ENCODE measurements at regions of chr3 and their contacts with region 1.

Region 1: GRCh38 chr3:69542221-69543079 is 156.6 kb upstream of the FRMD4B start:
- DNase-seq: peak in 4 of 5 donors; percentile 20 to 70 (median 46)
- ATAC-seq: peak; percentile 12 to 77 (median 70)
- H3K4me3 ChIP-seq: peak overlapping the region; percentile 55 to 77 (median 62)
- H3K27ac ChIP-seq: peak overlapping the region in 9 of 12 donors; percentile 3 to 70 (median 47)
- H3K4me1 ChIP-seq: peaks cover 0 to 24% (median 5%) of the 10 kb centered on the region in 12 donors
- H3K27me3 ChIP-seq: peaks cover 0 to 13% (median 0%) of the 10 kb centered on the region in 9 donors
- CTCF ChIP-seq: no peak
- POLR2A ChIP-seq: no peak

Region 2: DNA sequence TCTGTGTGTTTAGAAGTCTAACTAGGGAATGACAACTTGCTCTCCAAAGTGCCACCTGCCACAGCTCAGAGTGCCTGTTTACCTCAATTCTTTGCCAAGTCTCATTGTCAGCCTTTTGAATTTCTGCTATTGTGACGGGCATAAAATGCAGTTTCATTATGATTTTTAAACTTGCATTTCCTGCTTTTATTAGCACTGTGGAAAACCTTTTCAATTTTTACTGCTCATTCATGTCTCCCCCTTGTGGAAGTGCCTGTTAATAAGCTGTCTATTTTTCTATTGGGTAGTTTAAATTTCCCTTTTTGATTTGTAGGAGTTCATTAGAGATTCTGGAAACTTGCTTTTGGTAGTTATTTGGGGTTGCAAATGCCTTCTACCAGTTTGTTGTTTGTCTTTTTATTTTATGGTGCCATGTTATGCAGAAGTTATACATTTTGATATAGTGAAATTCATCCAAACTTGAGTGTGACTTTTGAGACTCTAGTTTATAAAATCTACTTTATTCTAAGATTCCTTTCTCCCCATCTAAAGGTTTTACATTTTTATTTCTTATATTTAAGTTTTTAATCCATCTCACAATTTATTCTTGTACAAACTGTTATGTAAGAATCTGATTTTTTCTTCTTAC is 102.7 kb before region 1 on chr3:
- intact Hi-C with region 1: loop called in 2 of 10 experiments (anchors 5 to 10 kb)
- DNase-seq: no peak
- ATAC-seq: peak in 2 of 4 donors; percentile 42 to 59
- H3K4me3 ChIP-seq: peak overlapping the region in 6 of 12 donors; percentile 8 to 39 (median 23)
- H3K27ac ChIP-seq: peak overlapping the region in 1 of 12 donors; percentile 16
- H3K4me1 ChIP-seq: peaks cover 0 to 20% (median 0%) of the 10 kb centered on the region in 12 donors
- H3K27me3 ChIP-seq: no peaks in the 10 kb centered on the region
- CTCF ChIP-seq: peak; percentile 26 to 76 (median 64)
- POLR2A ChIP-seq: no peak

Region 3: DNA sequence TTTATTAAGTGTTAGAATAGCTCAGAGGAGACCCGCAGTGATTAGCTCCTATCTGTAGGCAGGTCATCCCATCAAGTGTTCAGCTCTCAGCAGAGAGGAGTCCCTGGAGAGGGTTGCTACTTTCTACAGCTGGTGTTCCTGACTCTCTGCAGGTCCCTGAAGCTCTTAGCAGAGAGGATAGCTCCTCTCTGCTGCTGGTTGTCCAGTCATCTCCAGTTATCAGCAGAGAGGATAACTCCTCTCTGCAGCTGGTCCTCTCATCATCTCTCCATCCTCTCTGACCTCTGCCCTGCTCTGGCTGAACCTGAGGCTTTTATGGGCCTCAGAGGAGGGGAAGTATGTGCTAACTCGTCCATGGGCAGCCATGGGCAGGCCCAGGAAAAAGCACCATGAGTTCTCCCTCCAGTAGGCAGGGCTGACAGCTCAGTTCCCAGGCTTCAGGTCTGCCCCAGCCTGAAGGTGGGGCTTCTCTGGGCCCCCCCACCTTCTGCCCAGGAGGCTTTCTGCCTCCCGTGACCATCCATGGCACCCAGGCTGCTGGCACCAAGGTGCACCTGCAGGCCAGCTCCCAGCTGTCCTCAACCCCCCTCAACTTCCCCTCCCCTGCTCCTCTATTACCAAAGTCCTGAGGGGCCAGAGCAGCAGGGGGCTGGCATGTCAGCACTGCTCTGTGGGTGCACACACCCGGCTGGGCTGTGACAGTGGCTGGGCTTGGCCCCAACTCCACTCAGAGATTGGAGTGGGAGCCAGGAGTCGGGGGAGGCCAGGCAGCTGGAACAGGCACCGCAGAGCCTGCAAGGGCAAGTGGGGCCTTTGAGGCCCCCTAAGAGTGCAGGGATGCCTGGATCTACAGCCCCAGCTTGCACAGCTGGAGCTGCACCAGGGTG is 57.7 kb before region 1 on chr3:
- intact Hi-C with region 1: loop called in 1 of 10 experiments (anchors 5 kb)
- DNase-seq: peak; percentile 60 to 86 (median 73)
- ATAC-seq: peak; percentile 95 to 97 (median 96)
- H3K4me3 ChIP-seq: no peak overlapping the region
- H3K27ac ChIP-seq: peak overlapping the region in 9 of 12 donors; percentile 15 to 73 (median 47)
- H3K4me1 ChIP-seq: peaks cover 0 to 17% (median 6%) of the 10 kb centered on the region in 12 donors
- H3K27me3 ChIP-seq: no peaks in the 10 kb centered on the region
- CTCF ChIP-seq: no peak
- POLR2A ChIP-seq: no peak

Measured in heart left ventricle (tissue), 16 donors.